ENCODE measurements at regions of chr6 and their contacts with region 1.

Region 1: GRCh38 chr6:43454696-43455530 is 435 bp downstream of the DLK2 start:
- DNase-seq: peak; percentile 26 to 50 (median 31)
- H3K4me3 ChIP-seq: peak overlapping the region; percentile 52 to 68
- H3K4me3 Mint-ChIP-seq: peak overlapping the region; percentile 62 to 88 (median 84)
- H3K27ac ChIP-seq: peak overlapping the region; percentile 36
- H3K27ac Mint-ChIP-seq: peak overlapping the region in 6 of 7 donors; percentile 10 to 86 (median 76)
- H3K4me1 ChIP-seq: peaks cover 15% of the 10 kb centered on the region
- H3K4me1 Mint-ChIP-seq: peaks cover 7 to 23% (median 10%) of the 10 kb centered on the region in 4 donors
- H3K27me3 ChIP-seq: no peaks in the 10 kb centered on the region
- H3K27me3 Mint-ChIP-seq: peaks cover 2 to 5% of the 10 kb centered on the region in 2 donors

Region 2: DNA sequence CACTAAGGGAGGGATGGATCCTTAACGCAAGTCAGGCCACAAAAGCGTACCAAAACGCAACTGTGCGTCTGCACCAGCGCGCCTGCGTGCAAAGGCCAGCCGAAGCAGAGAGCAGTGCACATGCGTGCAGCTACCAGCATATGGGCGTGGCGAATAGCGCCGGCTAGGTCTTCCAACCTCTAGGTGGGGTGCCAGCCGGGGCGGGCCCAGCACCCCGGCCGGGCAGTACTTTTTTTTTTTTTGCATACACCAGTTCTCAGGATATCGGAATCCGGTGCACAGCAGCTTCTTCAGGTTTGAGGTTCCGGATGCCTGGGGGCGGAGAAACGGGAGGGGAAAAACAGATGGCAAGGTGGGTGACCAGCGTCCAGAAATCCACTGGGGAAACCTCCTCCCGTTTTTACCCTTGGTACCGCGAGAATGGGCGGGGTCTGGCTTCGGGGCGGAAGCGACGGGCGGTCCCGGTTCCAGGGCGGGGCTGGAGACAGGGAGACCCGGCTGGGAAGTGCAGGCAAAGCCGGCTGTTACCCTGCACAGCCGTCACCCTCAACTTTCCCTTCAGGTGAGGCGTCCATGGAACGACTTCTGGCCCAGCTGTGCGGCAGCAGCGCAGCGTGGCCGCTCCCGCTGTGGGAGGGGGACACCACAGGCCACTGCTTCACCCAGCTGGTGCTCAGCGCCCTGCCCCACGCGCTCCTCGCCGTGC is 27.4 kb before region 1 on chr6 and contains the start of gene ABCC10:
- CTCF ChIA-PET with region 1: interaction called, 3 read pairs
- POLR2A ChIA-PET with region 1: interaction called, 12 read pairs
- intact Hi-C with region 1: loop called (anchors 1 kb)
- DNase-seq: peak; percentile 93 to 97 (median 95)
- H3K4me3 ChIP-seq: peak within 1 kb of the TSS; percentile 70 to 95
- H3K4me3 Mint-ChIP-seq: peak within 1 kb of the TSS; percentile 92 to 98 (median 96)
- H3K27ac ChIP-seq: peak within 1 kb of the TSS; percentile 79
- H3K27ac Mint-ChIP-seq: peak within 1 kb of the TSS; percentile 88 to 99 (median 98)
- H3K4me1 ChIP-seq: peaks cover 30% of the 10 kb centered on the region
- H3K4me1 Mint-ChIP-seq: peaks cover 20 to 28% (median 24%) of the 10 kb centered on the region in 4 donors
- H3K27me3 ChIP-seq: no peaks in the 10 kb centered on the region
- H3K27me3 Mint-ChIP-seq: no peaks in the 10 kb centered on the region
- total RNA-seq, gene ABCC10: 69.9 to 80.0 TPM

Region 3: DNA sequence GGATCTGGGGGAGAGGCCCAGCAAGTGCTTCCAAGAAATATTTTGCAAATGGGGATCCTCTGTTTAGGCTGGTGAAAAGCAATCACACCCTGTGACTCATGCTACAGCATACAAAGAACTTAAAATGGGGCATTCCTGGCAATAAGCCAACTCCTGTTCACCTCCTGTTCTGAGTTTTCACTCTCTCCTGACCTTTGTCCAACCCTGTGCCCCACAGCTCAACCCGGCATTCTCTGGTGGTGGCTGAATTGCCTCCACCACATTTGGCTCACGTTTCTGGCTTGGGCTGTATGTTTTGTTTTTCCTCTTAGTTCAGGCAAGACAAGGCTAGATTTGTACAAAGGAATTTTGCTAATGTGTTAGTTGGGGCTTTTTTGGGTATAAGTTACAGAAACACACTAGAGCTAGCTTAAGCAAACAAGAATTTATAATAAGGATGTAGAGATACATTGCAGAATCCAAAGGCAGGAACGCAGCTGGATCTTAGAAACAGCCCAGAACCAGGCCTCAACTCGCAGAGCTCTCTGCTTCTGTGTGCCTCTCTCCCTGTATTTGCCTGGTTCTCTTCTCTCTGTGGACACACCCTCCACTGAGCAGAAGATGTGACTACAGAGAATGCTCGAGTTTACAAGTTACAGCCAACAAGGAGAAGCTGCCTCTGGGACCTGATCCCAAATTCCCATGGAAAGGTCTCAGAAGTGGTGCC is 18.2 kb before region 1 on chr6:
- CTCF ChIA-PET with region 1: interaction called, 28 read pairs
- POLR2A ChIA-PET with region 1: interaction called, 4 read pairs
- intact Hi-C with region 1: no loop called
- DNase-seq: no peak
- H3K4me3 ChIP-seq: no peak overlapping the region
- H3K4me3 Mint-ChIP-seq: no peak overlapping the region
- H3K27ac ChIP-seq: no peak overlapping the region
- H3K27ac Mint-ChIP-seq: peak overlapping the region in 1 of 7 donors; percentile 41
- H3K4me1 ChIP-seq: peaks cover 6% of the 10 kb centered on the region
- H3K4me1 Mint-ChIP-seq: peaks cover 1 to 4% (median 3%) of the 10 kb centered on the region in 4 donors
- H3K27me3 ChIP-seq: no peaks in the 10 kb centered on the region
- H3K27me3 Mint-ChIP-seq: no peaks in the 10 kb centered on the region

Region 4: DNA sequence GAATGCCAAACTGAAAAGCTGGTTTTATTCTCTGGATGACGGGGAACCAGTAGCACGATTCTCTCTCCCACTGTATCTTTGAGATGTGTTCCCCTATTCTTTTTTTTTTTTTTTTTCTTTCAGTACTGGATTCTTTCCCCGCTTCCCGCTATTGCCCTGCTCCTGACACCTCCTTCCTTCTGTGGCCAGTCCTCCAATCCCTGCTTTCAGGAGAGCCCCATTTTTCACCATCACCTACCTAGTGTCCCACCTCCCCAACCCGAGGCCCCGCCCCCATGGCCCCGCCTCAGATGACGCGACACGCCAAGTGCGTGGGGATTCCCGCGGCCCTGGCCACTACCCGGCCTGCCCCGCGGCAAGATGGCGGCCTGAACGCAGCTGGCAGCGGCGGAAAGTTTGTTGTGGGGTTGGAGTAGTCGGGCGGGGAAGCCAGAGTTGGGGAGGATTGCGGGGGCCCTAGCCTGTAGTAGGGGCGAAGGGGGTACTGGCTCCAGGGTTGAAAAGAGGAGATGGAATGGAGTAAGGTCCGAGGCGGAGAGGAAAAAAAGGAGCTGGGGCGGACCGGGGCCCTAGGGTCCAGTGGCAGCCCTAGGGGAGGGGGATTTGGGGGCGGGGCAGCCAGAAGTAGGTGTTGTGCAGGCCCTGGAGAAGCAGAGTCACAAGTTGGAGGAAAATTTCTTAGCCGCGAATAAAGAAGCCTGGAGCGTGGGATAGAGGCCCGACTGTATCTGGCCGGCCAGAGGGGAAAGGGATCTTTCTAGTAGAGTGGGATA is 22.5 kb after region 1 on chr6 and contains the start of gene TJAP1:
- CTCF ChIA-PET with region 1: interaction called, 5 read pairs
- POLR2A ChIA-PET with region 1: interaction called, 10 read pairs
- intact Hi-C with region 1: loop called (anchors 1 kb)
- DNase-seq: peak; percentile 93 to 96 (median 94)
- H3K4me3 ChIP-seq: peak within 1 kb of the TSS; percentile 45 to 69
- H3K4me3 Mint-ChIP-seq: peak within 1 kb of the TSS; percentile 85 to 97 (median 92)
- H3K27ac ChIP-seq: peak within 1 kb of the TSS; percentile 97
- H3K27ac Mint-ChIP-seq: peak within 1 kb of the TSS; percentile 89 to 99 (median 97)
- H3K4me1 ChIP-seq: peaks cover 28% of the 10 kb centered on the region
- H3K4me1 Mint-ChIP-seq: peaks cover 38 to 46% (median 42%) of the 10 kb centered on the region in 4 donors
- H3K27me3 ChIP-seq: no peaks in the 10 kb centered on the region
- H3K27me3 Mint-ChIP-seq: no peaks in the 10 kb centered on the region
- total RNA-seq, gene TJAP1: 52.0 to 54.4 TPM

Region 5: GRCh38 chr6:43496370-43497128 is 41.6 kb after region 1 on chr6:
- CTCF ChIA-PET with region 1: interaction called, 30 read pairs
- POLR2A ChIA-PET with region 1: interaction called, 7 read pairs
- intact Hi-C with region 1: loop called (anchors 1 kb)
- DNase-seq: no peak
- H3K4me3 ChIP-seq: no peak overlapping the region
- H3K4me3 Mint-ChIP-seq: no peak overlapping the region
- H3K27ac ChIP-seq: no peak overlapping the region
- H3K27ac Mint-ChIP-seq: peak overlapping the region in 5 of 7 donors; percentile 47 to 85 (median 65)
- H3K4me1 ChIP-seq: peaks cover 33% of the 10 kb centered on the region
- H3K4me1 Mint-ChIP-seq: peaks cover 20 to 37% (median 27%) of the 10 kb centered on the region in 4 donors
- H3K27me3 ChIP-seq: no peaks in the 10 kb centered on the region
- H3K27me3 Mint-ChIP-seq: no peaks in the 10 kb centered on the region

Region 6: GRCh38 chr6:43516697-43517504 is 62.0 kb after region 1 on chr6 and contains the starts of genes POLR1C and YIPF3:
- CTCF ChIA-PET with region 1: no interaction called
- POLR2A ChIA-PET with region 1: interaction called, 4 read pairs
- intact Hi-C with region 1: loop called (anchors 2 kb)
- DNase-seq: peak; percentile 91 to 97 (median 96)
- H3K4me3 ChIP-seq: peak within 1 kb of the TSS; percentile 91 to 99
- H3K4me3 Mint-ChIP-seq: no peak within 1 kb of the TSS
- H3K27ac ChIP-seq: peak within 1 kb of the TSS; percentile 92
- H3K27ac Mint-ChIP-seq: no peak within 1 kb of the TSS
- H3K4me1 ChIP-seq: peaks cover 44% of the 10 kb centered on the region
- H3K4me1 Mint-ChIP-seq: peaks cover 10 to 36% (median 24%) of the 10 kb centered on the region in 4 donors
- H3K27me3 ChIP-seq: no peaks in the 10 kb centered on the region
- H3K27me3 Mint-ChIP-seq: no peaks in the 10 kb centered on the region
- total RNA-seq, gene POLR1C: 42.5 to 47.7 TPM
- total RNA-seq, gene YIPF3: 74.8 to 82.9 TPM

Region 7: GRCh38 chr6:43702534-43703440 is 247.9 kb after region 1 on chr6:
- CTCF ChIA-PET with region 1: no interaction called
- POLR2A ChIA-PET with region 1: no interaction called
- intact Hi-C with region 1: no loop called
- DNase-seq: peak in 1 of 5 donors; percentile 44
- H3K4me3 ChIP-seq: no peak overlapping the region
- H3K4me3 Mint-ChIP-seq: no peak overlapping the region
- H3K27ac ChIP-seq: no peak overlapping the region
- H3K27ac Mint-ChIP-seq: no peak overlapping the region
- H3K4me1 ChIP-seq: no peaks in the 10 kb centered on the region
- H3K4me1 Mint-ChIP-seq: peaks cover 0 to 5% (median under 1%) of the 10 kb centered on the region in 4 donors
- H3K27me3 ChIP-seq: no peaks in the 10 kb centered on the region
- H3K27me3 Mint-ChIP-seq: peaks cover 27 to 46% of the 10 kb centered on the region in 2 donors

Measured in CD4-positive, alpha-beta memory T cell (primary cell).